ENCODE measurements at regions of chr4 and their contacts with region 1.

Region 1: DNA sequence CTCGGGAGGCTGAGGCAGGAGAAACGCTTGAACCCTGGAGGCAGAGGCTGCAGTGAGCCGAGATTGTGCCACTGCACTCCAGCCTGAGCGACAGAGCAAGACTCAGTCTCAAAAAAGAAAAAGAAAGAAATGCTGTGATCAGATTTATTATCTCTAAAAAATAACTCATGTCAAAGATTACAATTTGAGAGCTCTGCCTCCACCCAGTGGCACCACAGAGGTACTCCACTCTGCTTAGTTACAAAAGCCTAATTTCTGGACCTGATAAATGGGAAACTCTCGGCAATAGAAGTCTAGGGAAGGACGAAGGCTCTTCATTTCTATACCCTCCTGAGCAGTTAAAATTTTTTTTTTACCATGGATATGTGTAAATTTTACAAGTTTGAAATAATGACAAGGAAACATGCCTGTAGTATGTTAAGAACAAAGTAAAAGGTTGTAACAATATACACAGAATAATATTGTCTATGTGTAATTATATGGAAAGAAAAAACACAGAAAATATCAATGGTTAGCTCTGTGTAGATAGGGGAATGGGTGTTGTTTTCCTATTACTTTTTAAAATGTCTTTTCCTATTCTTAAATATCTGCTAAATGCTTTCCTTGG is 149.8 kb downstream of the STIM2 start:
- DNase-seq: peak; percentile 53 to 88 (median 71)
- H3K4me3 ChIP-seq: no peak overlapping the region
- H3K27ac ChIP-seq: no peak overlapping the region
- H3K4me1 ChIP-seq: peaks cover 4 to 19% of the 10 kb centered on the region in 2 donors
- H3K27me3 ChIP-seq: no peaks in the 10 kb centered on the region
- CTCF ChIP-seq: peak; percentile 84 to 97 (median 93)
- POLR2A ChIP-seq: no peak

Region 2: GRCh38 chr4:26452565-26453531 is 557.6 kb before region 1 on chr4:
- intact Hi-C with region 1: loop called (anchors 5 to 10 kb)
- DNase-seq: no peak
- H3K4me3 ChIP-seq: no peak overlapping the region
- H3K27ac ChIP-seq: no peak overlapping the region
- H3K4me1 ChIP-seq: no peaks in the 10 kb centered on the region
- H3K27me3 ChIP-seq: no peaks in the 10 kb centered on the region
- CTCF ChIP-seq: no peak
- POLR2A ChIP-seq: no peak

Region 3: DNA sequence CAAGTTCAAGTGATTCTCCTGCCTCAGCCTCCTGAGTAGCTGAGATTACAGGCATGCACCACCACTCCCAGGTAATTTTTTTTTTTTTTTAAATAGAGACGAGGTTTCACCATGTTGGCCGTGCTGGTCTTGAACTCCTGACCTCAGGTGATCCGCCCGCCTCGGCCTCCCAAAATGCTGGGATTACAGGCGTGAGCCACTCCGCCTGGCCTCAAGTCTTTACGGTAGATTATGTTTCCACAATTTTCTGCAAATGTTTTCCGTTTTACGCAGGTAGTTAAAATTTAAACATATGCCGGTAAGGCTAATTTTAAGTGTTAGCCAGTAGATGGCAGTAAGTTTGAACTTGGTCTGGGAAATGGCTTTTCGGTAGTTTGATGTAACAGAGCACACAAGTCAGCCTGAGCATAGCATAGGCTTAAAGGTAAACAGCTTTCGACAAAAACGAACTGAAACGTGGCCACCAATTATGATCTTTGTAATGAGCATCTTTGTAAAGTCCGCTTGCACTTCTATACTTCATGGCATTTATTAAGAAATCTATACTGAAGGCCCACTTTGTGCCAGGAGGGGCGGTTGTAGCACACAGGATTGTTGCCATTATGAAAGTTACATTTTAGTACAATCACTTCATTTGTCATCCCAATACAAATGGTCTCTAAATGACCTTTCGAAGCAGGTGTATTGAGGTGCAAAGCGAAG is 551.2 kb before region 1 on chr4:
- intact Hi-C with region 1: loop called (anchors 5 to 10 kb)
- DNase-seq: peak in 2 of 7 donors; percentile 25 to 28
- H3K4me3 ChIP-seq: no peak overlapping the region
- H3K27ac ChIP-seq: no peak overlapping the region
- H3K4me1 ChIP-seq: no peaks in the 10 kb centered on the region
- H3K27me3 ChIP-seq: no peaks in the 10 kb centered on the region
- CTCF ChIP-seq: peak; percentile 53 to 67 (median 62)
- POLR2A ChIP-seq: no peak

Region 4: GRCh38 chr4:26736621-26737020 is 273.8 kb before region 1 on chr4:
- intact Hi-C with region 1: loop called in 1 of 2 experiments (anchors 5 kb)
- DNase-seq: no peak
- H3K4me3 ChIP-seq: no peak overlapping the region
- H3K27ac ChIP-seq: no peak overlapping the region
- H3K4me1 ChIP-seq: peaks cover 0 to under 1% of the 10 kb centered on the region in 2 donors
- H3K27me3 ChIP-seq: no peaks in the 10 kb centered on the region
- CTCF ChIP-seq: no peak
- POLR2A ChIP-seq: no peak

Region 5: DNA sequence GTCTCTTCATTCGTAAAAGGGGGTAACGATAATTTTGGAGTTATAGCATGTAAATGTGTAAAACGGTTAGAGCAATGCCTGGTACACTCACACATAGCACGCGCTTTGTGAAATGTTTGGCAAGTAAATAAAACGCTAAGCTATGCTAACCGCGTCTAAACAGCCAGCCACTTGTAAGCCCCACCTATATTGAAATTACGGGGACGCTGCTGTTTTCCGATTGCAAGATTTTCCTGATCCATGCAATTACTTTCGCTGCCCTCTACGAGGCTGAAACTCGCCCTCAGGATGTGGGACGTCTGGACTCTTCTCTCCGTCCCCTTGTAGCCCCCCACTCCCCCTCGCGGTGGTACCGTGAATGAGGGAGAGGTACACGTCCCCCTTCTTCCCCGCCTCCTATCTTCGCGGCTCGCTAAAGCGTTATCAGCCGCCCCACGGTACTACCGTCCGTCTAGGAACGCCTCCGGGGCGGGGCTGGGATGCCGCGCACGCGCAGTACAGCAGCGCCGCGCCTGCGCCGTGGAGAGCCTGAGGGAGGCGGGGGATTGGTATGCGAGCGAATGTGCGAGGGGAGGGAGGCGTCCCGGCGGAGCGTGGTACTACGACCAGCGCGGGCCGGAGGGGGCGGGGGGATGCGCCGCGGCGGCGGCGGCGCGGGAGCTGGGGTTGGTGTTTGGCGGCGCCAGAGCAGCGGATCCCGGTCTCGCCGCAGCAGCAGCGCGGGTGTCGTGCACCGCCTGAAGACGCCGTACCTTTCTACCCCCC is 150.1 kb before region 1 on chr4 and contains the start of gene STIM2:
- intact Hi-C with region 1: loop called in 1 of 2 experiments (anchors 5 kb)
- DNase-seq: peak; percentile 96 to 98 (median 96)
- H3K4me3 ChIP-seq: peak within 1 kb of the TSS; percentile 12 to 98 (median 72)
- H3K27ac ChIP-seq: peak within 1 kb of the TSS; percentile 40 to 99 (median 92)
- H3K4me1 ChIP-seq: peaks cover 18 to 50% of the 10 kb centered on the region in 2 donors
- H3K27me3 ChIP-seq: no peaks in the 10 kb centered on the region
- CTCF ChIP-seq: peak; percentile 8 to 58 (median 43)
- POLR2A ChIP-seq: peak; percentile 59 to 92
- total RNA-seq, gene STIM2: 7.5 to 30.4 (median 17.8) TPM

Region 6: DNA sequence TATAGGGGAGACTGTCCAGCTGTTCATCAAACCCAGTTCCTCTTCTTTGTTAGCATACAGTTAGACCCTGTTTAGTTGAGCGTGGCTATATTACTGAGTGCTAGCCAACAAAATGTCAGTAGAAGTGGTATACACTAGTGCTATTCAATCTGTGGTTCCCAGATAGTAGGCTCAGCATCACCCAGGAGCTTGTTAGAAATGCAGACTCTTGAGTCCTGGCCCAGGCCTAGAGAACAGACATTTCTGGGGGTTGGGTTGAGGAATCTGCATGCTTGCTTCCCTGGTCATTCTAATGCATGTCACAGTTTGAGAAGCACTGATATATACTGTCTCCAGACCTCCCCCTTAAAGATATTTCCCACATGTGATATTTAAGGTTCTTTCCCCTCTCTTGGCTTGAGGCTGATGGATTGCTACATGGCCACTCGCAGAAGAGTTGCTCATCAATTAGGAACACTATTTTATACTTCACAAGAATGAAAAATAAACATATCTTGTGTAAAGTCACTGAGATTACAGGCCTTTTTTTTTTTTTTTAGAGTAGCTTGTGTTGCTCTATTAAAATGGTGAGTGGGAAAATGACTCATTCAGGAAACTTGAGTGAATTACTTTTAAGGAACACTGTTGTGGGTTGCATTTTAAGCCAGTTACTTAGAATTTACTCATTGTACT is 139.2 kb after region 1 on chr4:
- intact Hi-C with region 1: no loop called
- DNase-seq: no peak
- H3K4me3 ChIP-seq: no peak overlapping the region
- H3K27ac ChIP-seq: no peak overlapping the region
- H3K4me1 ChIP-seq: no peaks in the 10 kb centered on the region
- H3K27me3 ChIP-seq: no peaks in the 10 kb centered on the region
- CTCF ChIP-seq: no peak
- POLR2A ChIP-seq: no peak

Region 7: DNA sequence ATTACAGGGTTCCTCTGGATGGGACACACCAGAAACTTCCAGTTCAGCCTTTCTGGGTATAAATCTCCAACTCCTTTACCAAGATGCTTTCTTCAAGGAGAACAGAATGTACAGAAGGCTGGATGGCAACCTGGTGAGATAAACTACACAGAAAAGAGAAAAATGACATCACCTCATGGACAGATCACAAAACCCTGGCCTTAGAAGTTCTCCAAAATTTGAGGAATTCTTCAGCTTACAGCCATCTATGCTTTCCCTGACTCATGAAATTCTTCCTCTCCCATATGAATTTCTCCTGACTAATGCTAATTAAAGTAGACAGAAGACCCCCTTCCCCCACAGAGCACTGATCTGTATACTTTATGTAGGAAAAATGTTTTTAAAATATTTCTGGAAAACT is 195.6 kb after region 1 on chr4:
- intact Hi-C with region 1: no loop called
- DNase-seq: no peak
- H3K4me3 ChIP-seq: no peak overlapping the region
- H3K27ac ChIP-seq: no peak overlapping the region
- H3K4me1 ChIP-seq: no peaks in the 10 kb centered on the region
- H3K27me3 ChIP-seq: no peaks in the 10 kb centered on the region
- CTCF ChIP-seq: no peak
- POLR2A ChIP-seq: no peak

Measured in adrenal gland (tissue), 19 donors.